B cell (primary cell): ENCODE measurements at regions of chr4 and their contacts with region 1.

Region 1: DNA sequence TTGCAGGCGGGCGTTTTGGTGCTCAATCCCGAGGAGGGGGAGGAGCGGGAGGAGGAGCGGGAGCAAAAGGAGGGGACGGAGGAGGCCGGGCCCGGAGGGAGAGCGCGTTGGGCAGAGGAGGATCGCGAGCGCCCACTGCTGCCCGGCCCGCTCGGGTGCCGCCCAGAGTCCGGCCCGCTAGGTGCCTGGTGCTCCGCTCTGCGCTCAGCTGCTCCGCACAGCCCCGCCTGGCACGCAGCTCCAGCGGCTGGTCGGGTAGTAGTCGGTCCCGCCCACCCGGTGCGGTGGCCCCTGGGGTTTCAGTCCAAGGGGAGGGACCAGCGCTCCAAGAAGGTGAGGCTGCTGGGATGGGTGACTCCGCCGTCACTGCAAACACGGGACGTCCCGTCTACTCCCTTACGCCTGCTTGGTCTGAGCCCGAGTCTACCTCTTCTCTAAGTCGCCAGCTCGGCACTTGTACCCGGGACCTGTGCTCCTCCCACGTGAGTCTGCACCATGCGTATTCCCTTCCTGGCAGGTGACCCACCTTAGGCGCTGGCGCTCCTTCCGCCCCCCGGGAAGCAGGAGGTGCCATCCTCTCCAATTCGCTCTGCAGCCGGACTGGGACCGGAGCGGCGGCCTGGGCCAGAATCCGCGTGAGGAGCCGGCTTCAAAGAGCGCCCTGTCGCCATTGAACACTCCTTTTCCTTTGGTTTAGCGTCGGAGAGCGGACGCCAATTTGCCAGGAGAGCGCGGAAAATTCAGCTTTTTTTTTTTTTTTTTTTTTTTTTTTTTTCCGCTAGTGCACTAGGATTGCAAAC is 405 bp upstream of the HS3ST1 start:
- DNase-seq: peak; percentile 85
- ATAC-seq: peak; percentile 90
- H3K4me3 ChIP-seq: peak overlapping the region; percentile 70 to 96 (median 79)
- H3K4me3 Mint-ChIP-seq: peak overlapping the region; percentile 88
- H3K27ac ChIP-seq: peak overlapping the region; percentile 46 to 64
- H3K27ac Mint-ChIP-seq: peak overlapping the region; percentile 92
- H3K4me1 ChIP-seq: peaks cover 42 to 50% of the 10 kb centered on the region in 2 donors
- H3K4me1 Mint-ChIP-seq: peaks cover 68% of the 10 kb centered on the region
- H3K27me3 ChIP-seq: no peaks in the 10 kb centered on the region
- H3K27me3 Mint-ChIP-seq: no peaks in the 10 kb centered on the region
- CTCF ChIP-seq: peak; percentile 72

Region 2: DNA sequence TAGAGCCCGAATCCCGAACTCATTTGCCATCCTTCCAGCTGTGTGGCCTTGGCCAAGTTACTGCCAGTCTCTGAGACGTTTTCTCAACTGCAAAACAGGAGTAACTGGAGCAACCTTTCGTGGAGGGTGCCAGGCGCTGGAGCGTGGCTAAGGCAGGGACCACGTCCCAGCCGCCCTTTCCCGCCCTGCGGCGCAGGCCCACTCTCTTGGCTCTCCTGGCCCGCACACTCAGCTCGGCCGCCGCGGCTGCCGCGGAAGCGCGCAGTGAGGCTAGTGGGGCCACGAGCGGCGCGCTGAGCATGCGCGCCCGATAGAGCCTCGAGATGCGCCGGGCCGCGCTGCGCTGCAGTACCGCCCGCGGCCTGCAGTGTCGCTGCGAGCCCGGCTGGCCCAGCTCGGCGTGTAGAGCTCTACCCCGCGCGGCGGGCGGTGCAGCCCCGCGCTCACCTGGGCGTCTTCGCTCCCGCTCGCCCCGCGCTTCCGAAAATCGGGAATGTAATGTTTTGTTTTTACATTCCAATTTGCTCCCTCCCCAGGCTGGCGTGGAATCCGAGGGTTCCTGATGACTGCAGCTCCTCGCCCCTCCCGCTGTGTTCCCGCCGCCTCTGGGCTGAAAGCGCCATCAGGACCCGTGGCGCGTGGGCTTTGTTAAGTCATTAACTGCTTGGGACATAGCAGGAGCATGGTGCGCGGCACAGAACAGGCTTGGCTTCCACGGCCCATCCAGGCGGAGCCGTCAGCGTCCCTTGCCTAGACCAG is 967.8 kb before region 1 on chr4:
- CTCF ChIA-PET with region 1: no interaction called
- POLR2A ChIA-PET with region 1: no interaction called
- intact Hi-C with region 1: loop called (anchors 10 kb)
- DNase-seq: peak; percentile 91
- ATAC-seq: peak; percentile 82
- H3K4me3 ChIP-seq: peak overlapping the region; percentile 27 to 62 (median 48)
- H3K4me3 Mint-ChIP-seq: peak overlapping the region; percentile 82
- H3K27ac ChIP-seq: no peak overlapping the region
- H3K27ac Mint-ChIP-seq: no peak overlapping the region
- H3K4me1 ChIP-seq: peaks cover 13 to 25% of the 10 kb centered on the region in 2 donors
- H3K4me1 Mint-ChIP-seq: peaks cover 21% of the 10 kb centered on the region
- H3K27me3 ChIP-seq: peaks cover 0 to 40% (median 17%) of the 10 kb centered on the region in 4 experiments
- H3K27me3 Mint-ChIP-seq: peaks cover 48% of the 10 kb centered on the region
- CTCF ChIP-seq: peak; percentile 99

Region 3: DNA sequence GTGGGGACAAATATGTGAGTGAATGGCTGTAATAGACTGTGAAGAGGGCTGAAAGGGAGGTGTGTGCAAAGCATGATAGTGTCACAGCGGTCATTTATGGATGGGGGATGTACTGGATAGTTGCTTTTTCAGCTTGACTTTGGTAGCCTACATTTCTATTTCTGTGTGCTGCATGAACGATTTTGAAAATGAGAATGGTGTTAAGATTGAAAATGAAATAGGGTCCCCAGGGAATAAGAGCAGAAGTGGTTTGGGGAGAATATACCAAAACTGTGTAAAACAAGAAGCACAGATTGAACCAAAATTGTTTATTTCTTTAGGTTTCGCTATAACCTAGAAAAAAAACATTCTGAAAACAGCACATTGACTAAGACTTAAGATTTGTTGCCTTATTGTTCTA is 685.7 kb before region 1 on chr4:
- CTCF ChIA-PET with region 1: interaction called, 4 read pairs
- POLR2A ChIA-PET with region 1: no interaction called
- intact Hi-C with region 1: loop called (anchors 10 kb)
- DNase-seq: peak; percentile 75
- ATAC-seq: peak; percentile 84
- H3K4me3 ChIP-seq: peak overlapping the region in 1 of 5 experiments; percentile 29
- H3K4me3 Mint-ChIP-seq: no peak overlapping the region
- H3K27ac ChIP-seq: peak overlapping the region; percentile 31 to 44
- H3K27ac Mint-ChIP-seq: no peak overlapping the region
- H3K4me1 ChIP-seq: peaks cover 34 to 41% of the 10 kb centered on the region in 2 donors
- H3K4me1 Mint-ChIP-seq: peaks cover 15% of the 10 kb centered on the region
- H3K27me3 ChIP-seq: no peaks in the 10 kb centered on the region
- H3K27me3 Mint-ChIP-seq: no peaks in the 10 kb centered on the region
- CTCF ChIP-seq: no peak

Region 4: GRCh38 chr4:11021333-11021732 is 407.8 kb before region 1 on chr4:
- CTCF ChIA-PET with region 1: no interaction called
- POLR2A ChIA-PET with region 1: no interaction called
- intact Hi-C with region 1: no loop called
- DNase-seq: no peak
- ATAC-seq: no peak
- H3K4me3 ChIP-seq: no peak overlapping the region
- H3K4me3 Mint-ChIP-seq: no peak overlapping the region
- H3K27ac ChIP-seq: no peak overlapping the region
- H3K27ac Mint-ChIP-seq: no peak overlapping the region
- H3K4me1 ChIP-seq: no peaks in the 10 kb centered on the region
- H3K4me1 Mint-ChIP-seq: no peaks in the 10 kb centered on the region
- H3K27me3 ChIP-seq: no peaks in the 10 kb centered on the region
- H3K27me3 Mint-ChIP-seq: no peaks in the 10 kb centered on the region
- CTCF ChIP-seq: no peak

Region 5: DNA sequence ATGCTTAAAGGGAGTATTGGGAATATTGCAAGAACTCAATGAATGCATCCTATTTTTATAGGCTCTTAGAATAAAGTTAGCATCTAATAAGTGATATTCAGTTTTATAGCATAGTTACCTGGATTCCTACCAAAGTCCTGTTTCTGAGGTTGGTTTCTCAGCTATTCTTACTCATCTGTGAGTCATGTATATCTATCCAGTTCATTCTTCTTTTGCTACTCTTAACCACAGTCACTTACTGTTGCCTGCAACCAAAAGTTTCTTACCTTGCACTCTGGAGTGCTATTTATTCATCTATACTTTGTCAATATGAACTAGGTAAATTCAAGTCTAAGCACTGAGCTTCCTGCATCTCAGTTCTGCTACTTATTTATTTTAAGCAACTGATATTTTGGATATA is 322.9 kb before region 1 on chr4:
- CTCF ChIA-PET with region 1: no interaction called
- POLR2A ChIA-PET with region 1: no interaction called
- intact Hi-C with region 1: loop called (anchors 2 kb)
- DNase-seq: no peak
- ATAC-seq: no peak
- H3K4me3 ChIP-seq: no peak overlapping the region
- H3K4me3 Mint-ChIP-seq: no peak overlapping the region
- H3K27ac ChIP-seq: peak overlapping the region in 1 of 2 donors; percentile 19
- H3K27ac Mint-ChIP-seq: no peak overlapping the region
- H3K4me1 ChIP-seq: peaks cover 15 to 16% of the 10 kb centered on the region in 2 donors
- H3K4me1 Mint-ChIP-seq: peaks cover 45% of the 10 kb centered on the region
- H3K27me3 ChIP-seq: no peaks in the 10 kb centered on the region
- H3K27me3 Mint-ChIP-seq: no peaks in the 10 kb centered on the region
- CTCF ChIP-seq: no peak

Region 6: DNA sequence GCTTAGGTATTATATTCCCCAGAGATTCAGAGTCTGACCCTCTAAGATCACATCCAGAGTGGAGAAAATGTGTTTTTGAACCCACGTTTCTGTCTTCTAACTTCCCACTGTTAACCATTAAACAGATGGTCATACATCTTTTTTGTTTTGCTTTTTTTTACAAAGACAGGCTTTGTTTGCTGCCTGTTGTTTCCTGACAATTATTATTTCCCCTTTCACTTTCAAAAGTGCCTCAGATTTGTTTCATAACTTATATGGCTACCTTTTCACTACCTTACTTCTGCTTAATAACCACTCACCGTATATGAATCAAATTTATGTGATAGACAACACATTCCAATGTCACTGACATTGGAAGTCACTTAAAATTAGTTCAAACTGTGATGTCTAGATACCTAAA is 142.6 kb before region 1 on chr4:
- CTCF ChIA-PET with region 1: interaction called, 3 read pairs
- POLR2A ChIA-PET with region 1: no interaction called
- intact Hi-C with region 1: loop called (anchors 1 kb)
- DNase-seq: peak; percentile 62
- ATAC-seq: peak; percentile 76
- H3K4me3 ChIP-seq: peak overlapping the region in 2 of 5 experiments; percentile 0 to 9
- H3K4me3 Mint-ChIP-seq: peak overlapping the region; percentile 60
- H3K27ac ChIP-seq: peak overlapping the region; percentile 37 to 72
- H3K27ac Mint-ChIP-seq: peak overlapping the region; percentile 84
- H3K4me1 ChIP-seq: peaks cover 14% of the 10 kb centered on the region in 2 donors
- H3K4me1 Mint-ChIP-seq: peaks cover 16% of the 10 kb centered on the region
- H3K27me3 ChIP-seq: no peaks in the 10 kb centered on the region
- H3K27me3 Mint-ChIP-seq: no peaks in the 10 kb centered on the region
- CTCF ChIP-seq: no peak

Region 7: DNA sequence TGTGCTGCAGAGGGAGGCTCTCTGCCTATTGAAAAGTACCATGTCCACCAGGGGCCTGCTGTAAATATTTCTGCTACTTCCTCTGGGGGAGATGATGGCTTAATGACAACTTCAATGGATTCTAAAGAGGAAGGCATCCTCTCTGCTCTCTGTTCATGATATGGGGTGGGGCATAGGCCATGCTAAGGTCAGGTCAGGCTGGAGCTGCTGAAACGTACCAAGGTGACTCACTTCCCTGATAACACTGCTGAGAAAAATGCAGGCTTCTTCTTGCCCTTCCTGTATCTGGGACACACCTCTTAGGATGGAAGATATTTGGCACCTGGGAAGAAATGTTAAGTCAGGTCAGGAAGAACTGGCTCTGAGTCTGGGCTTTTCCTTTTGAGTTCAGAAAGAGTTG is 32.0 kb before region 1 on chr4:
- CTCF ChIA-PET with region 1: no interaction called
- POLR2A ChIA-PET with region 1: no interaction called
- intact Hi-C with region 1: no loop called
- DNase-seq: no peak
- ATAC-seq: no peak
- H3K4me3 ChIP-seq: no peak overlapping the region
- H3K4me3 Mint-ChIP-seq: no peak overlapping the region
- H3K27ac ChIP-seq: no peak overlapping the region
- H3K27ac Mint-ChIP-seq: peak overlapping the region; percentile 16
- H3K4me1 ChIP-seq: peaks cover 2 to 4% of the 10 kb centered on the region in 2 donors
- H3K4me1 Mint-ChIP-seq: peaks cover 27% of the 10 kb centered on the region
- H3K27me3 ChIP-seq: no peaks in the 10 kb centered on the region
- H3K27me3 Mint-ChIP-seq: no peaks in the 10 kb centered on the region
- CTCF ChIP-seq: no peak

Region 8: GRCh38 chr4:11471618-11472017 is 42.5 kb after region 1 on chr4:
- CTCF ChIA-PET with region 1: interaction called, 4 read pairs
- POLR2A ChIA-PET with region 1: interaction called, 3 read pairs
- intact Hi-C with region 1: loop called (anchors 2 kb)
- DNase-seq: peak; percentile 81
- ATAC-seq: peak; percentile 82
- H3K4me3 ChIP-seq: peak overlapping the region; percentile 2 to 59 (median 53)
- H3K4me3 Mint-ChIP-seq: peak overlapping the region; percentile 86
- H3K27ac ChIP-seq: peak overlapping the region; percentile 74 to 81
- H3K27ac Mint-ChIP-seq: peak overlapping the region; percentile 96
- H3K4me1 ChIP-seq: peaks cover 39 to 42% of the 10 kb centered on the region in 2 donors
- H3K4me1 Mint-ChIP-seq: peaks cover 47% of the 10 kb centered on the region
- H3K27me3 ChIP-seq: no peaks in the 10 kb centered on the region
- H3K27me3 Mint-ChIP-seq: no peaks in the 10 kb centered on the region
- CTCF ChIP-seq: no peak

Region 9: GRCh38 chr4:11566444-11567022 is 137.4 kb after region 1 on chr4:
- CTCF ChIA-PET with region 1: no interaction called
- POLR2A ChIA-PET with region 1: no interaction called
- intact Hi-C with region 1: no loop called
- DNase-seq: peak; percentile 7
- ATAC-seq: no peak
- H3K4me3 ChIP-seq: no peak overlapping the region
- H3K4me3 Mint-ChIP-seq: no peak overlapping the region
- H3K27ac ChIP-seq: no peak overlapping the region
- H3K27ac Mint-ChIP-seq: no peak overlapping the region
- H3K4me1 ChIP-seq: peaks cover 0 to 4% of the 10 kb centered on the region in 2 donors
- H3K4me1 Mint-ChIP-seq: peaks cover 6% of the 10 kb centered on the region
- H3K27me3 ChIP-seq: no peaks in the 10 kb centered on the region
- H3K27me3 Mint-ChIP-seq: no peaks in the 10 kb centered on the region
- CTCF ChIP-seq: no peak

Region 10: GRCh38 chr4:11814758-11815157 is 385.7 kb after region 1 on chr4:
- CTCF ChIA-PET with region 1: no interaction called
- POLR2A ChIA-PET with region 1: no interaction called
- intact Hi-C with region 1: no loop called
- DNase-seq: no peak
- ATAC-seq: no peak
- H3K4me3 ChIP-seq: no peak overlapping the region
- H3K4me3 Mint-ChIP-seq: no peak overlapping the region
- H3K27ac ChIP-seq: no peak overlapping the region
- H3K27ac Mint-ChIP-seq: no peak overlapping the region
- H3K4me1 ChIP-seq: no peaks in the 10 kb centered on the region
- H3K4me1 Mint-ChIP-seq: no peaks in the 10 kb centered on the region
- H3K27me3 ChIP-seq: no peaks in the 10 kb centered on the region
- H3K27me3 Mint-ChIP-seq: no peaks in the 10 kb centered on the region
- CTCF ChIP-seq: no peak